Kidney (tissue), 22 donors: ENCODE measurements at regions of chr19 and their contacts with region 1.

Region 1: DNA sequence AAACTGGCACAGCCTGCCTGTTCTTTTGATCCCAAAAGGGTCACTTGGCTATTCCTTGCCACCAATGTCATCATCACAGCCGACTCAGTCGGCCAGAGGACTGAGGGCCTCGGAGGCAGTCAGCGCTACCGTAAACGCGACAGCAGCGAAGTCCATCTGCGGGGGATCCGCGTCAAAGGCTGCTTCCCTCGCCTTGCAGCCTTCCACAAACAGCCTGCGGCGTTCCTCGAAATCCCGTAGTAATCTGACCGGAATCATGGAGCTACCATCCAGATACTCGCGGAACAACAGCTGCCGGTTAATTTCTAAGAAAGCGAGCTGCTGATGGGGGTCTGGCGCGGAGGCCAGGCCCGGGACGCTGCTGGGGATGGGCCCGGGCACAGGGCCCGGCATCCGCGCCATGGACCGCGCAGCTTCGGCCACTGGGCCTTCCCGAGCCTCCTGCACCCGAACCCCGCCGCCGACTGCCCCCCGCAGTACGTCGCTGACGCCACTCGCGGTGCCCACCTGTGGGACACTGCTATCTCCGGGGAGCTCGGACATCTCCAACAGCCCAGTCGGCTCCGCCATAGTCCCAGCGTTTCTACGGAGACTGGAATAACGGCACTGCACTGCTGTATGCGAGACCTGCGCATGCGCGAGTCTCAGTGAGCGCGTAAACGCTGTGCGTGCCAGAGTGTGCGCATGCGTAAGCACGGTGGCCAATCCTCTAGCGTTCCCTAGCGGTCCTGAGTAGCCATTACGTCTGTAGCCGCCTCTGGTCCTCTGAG is at the start of gene EID2B:
- DNase-seq: peak; percentile 96 to 99 (median 98)
- H3K4me3 ChIP-seq: peak within 1 kb of the TSS; percentile 78 to 86 (median 81)
- H3K27ac ChIP-seq: peak within 1 kb of the TSS; percentile 66 to 72
- H3K4me1 ChIP-seq: peaks cover 0 to 5% (median 0%) of the 10 kb centered on the region in 3 donors
- H3K27me3 ChIP-seq: no peaks in the 10 kb centered on the region
- CTCF ChIP-seq: peak; percentile 99
- total RNA-seq, gene EID2B: 3.3 TPM

Region 2: GRCh38 chr19:39435499-39436349 is 96.7 kb before region 1 on chr19 and contains the start of gene RPS16:
- intact Hi-C with region 1: no loop called
- DNase-seq: peak; percentile 99 to 100 (median 99)
- H3K4me3 ChIP-seq: peak within 1 kb of the TSS; percentile 91 to 97 (median 94)
- H3K27ac ChIP-seq: peak within 1 kb of the TSS; percentile 73 to 77
- H3K4me1 ChIP-seq: peaks cover 0 to 17% (median 12%) of the 10 kb centered on the region in 3 donors
- H3K27me3 ChIP-seq: no peaks in the 10 kb centered on the region
- CTCF ChIP-seq: no peak
- total RNA-seq, gene RPS16: 1,461 TPM

Region 3: DNA sequence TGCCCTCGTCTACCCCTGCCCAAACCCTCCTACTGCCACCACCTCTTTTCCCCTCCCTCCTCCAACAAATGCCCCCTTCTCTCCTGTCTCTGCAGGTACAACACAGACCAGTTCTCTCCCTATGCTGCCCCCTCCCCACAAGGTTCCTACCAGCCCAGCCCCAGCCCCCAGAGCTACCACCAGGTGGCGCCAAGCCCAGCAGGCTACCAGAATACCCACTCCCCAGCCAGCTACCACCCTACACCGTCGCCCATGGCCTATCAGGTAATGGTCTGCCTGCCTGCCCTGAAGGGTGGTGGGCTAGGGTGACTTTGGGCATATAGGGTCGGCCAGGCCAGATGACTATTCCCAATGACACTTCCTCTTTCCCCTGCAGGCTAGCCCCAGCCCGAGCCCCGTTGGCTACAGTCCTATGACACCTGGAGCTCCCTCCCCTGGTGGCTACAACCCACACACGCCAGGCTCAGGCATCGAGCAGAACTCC is 58.2 kb before region 1 on chr19:
- intact Hi-C with region 1: loop called (anchors 10 kb)
- DNase-seq: peak in 4 of 5 donors; percentile 67 to 81 (median 73)
- H3K4me3 ChIP-seq: no peak overlapping the region
- H3K27ac ChIP-seq: no peak overlapping the region
- H3K4me1 ChIP-seq: no peaks in the 10 kb centered on the region
- H3K27me3 ChIP-seq: no peaks in the 10 kb centered on the region
- CTCF ChIP-seq: peak; percentile 68